Activated CD4-positive, alpha-beta memory T cell treated with anti-CD3 and anti-CD28 coated beads, Interleukin-2, amount 10 ng/mL, durations not matched to agents 7 days and 5 days (primary cell): ENCODE measurements at regions of chr9 and their contacts with region 1.

Region 1: GRCh38 chr9:112315331-112316257 is 17.8 kb downstream of the PTBP3 start:
- DNase-seq: no peak
- H3K4me3 Mint-ChIP-seq: peak overlapping the region; percentile 42
- H3K27ac Mint-ChIP-seq: peak overlapping the region; percentile 81
- H3K4me1 Mint-ChIP-seq: peaks cover 70% of the 10 kb centered on the region
- H3K27me3 Mint-ChIP-seq: no peaks in the 10 kb centered on the region

Region 2: DNA sequence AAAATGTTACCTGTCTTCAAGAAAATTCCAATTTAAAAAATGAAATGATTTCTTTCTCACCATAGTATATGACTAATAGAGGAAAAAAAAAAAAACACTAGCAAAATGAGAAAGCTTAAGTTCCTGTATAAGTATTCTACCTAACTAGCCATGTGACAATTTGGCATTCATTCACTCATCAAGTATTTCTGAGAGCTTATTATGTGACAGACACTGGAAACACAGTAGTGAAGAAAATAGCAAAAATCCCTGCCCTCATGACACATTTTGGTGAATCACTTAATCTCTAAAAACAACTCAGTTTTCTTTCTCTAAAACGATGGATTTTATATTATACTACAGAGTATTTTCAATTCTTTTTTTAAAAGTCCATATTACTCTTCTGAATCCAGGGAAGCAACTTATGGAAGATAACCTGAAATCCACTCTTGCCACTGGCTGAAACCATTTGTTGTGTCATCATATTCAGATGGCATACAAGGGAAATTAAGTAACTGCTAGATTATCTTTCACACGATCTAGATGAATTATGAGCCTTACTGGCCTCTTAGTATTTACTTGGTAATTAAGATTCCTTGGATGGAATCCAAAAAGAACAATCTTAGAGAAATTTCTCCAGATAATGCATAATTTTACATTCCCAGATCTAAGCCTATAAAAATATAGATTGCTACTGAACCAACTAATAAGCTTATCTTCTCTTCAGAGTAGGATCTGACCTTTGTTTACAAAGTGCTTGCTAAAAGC is 12.3 kb after region 1 on chr9:
- CTCF ChIA-PET with region 1: interaction called, 7 read pairs
- POLR2A ChIA-PET with region 1: interaction called, 90 read pairs
- DNase-seq: no peak
- H3K4me3 Mint-ChIP-seq: no peak overlapping the region
- H3K27ac Mint-ChIP-seq: peak overlapping the region; percentile 64
- H3K4me1 Mint-ChIP-seq: peaks cover 61% of the 10 kb centered on the region
- H3K27me3 Mint-ChIP-seq: no peaks in the 10 kb centered on the region